ENCODE measurements at regions of chr2 and their contacts with region 1.

Region 1: GRCh38 chr2:200888704-200889625 is at the starts of genes NIF3L1 and PPIL3:
- DNase-seq: peak; percentile 96
- H3K4me3 Mint-ChIP-seq: peak within 1 kb of the TSS; percentile 97
- H3K27ac Mint-ChIP-seq: peak within 1 kb of the TSS; percentile 99
- H3K4me1 Mint-ChIP-seq: peaks cover 54% of the 10 kb centered on the region
- H3K27me3 Mint-ChIP-seq: no peaks in the 10 kb centered on the region
- total RNA-seq, gene NIF3L1: 26.6 and 27.3 TPM in 2 replicates
- total RNA-seq, gene PPIL3: 44.2 TPM in 2 replicates

Region 2: DNA sequence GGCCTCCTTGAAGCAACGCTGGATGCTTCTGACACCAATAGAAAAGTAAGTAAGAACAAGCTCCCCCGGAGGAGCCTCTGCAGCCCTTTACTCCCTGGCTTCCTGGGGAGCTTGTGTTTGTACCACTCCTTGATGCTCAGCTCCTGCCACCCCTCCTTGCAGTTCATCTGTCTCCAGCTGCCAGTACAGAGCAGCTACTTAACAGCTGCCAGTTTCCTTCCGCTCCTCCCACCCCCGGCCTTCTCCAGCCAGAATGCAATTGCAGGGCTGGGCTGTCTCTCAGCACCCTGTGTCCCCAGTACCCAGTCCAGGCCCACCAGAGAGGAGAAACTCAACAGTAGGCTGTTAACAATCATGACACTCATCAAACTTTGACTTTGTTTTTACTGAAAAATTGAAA is 193.8 kb before region 1 on chr2:
- intact Hi-C with region 1: no loop called
- DNase-seq: no peak
- H3K4me3 Mint-ChIP-seq: no peak overlapping the region
- H3K27ac Mint-ChIP-seq: no peak overlapping the region
- H3K4me1 Mint-ChIP-seq: peaks cover 4% of the 10 kb centered on the region
- H3K27me3 Mint-ChIP-seq: no peaks in the 10 kb centered on the region

Region 3: GRCh38 chr2:200963124-200963917 is 74.4 kb after region 1 on chr2 and contains the start of gene ORC2:
- intact Hi-C with region 1: loop called (anchors 1 kb)
- DNase-seq: peak; percentile 93
- H3K4me3 Mint-ChIP-seq: peak within 1 kb of the TSS; percentile 97
- H3K27ac Mint-ChIP-seq: peak within 1 kb of the TSS; percentile 93
- H3K4me1 Mint-ChIP-seq: peaks cover 58% of the 10 kb centered on the region
- H3K27me3 Mint-ChIP-seq: no peaks in the 10 kb centered on the region
- total RNA-seq, gene ORC2: 63.1 and 63.3 TPM in 2 replicates